Activated T-helper 1 cell treated with anti-CD3 and anti-CD28 coated beads, Interleukin-12 subunit alpha, Interleukin-12 subunit beta, Interleukin-2, Interleukin-4 antibody, amounts not matched to agents 30 ng/mL and 10 ng/mL and 1 ng/mL, durations not matched to agents 14 hours and 24 hours and 36 hours (primary cell): ENCODE measurements at regions of chr11 and their contacts with region 1.

Region 1: GRCh38 chr11:71977743-71978418 is 20.8 kb upstream of the IL18BP start:
- DNase-seq: peak; percentile 26
- H3K4me3 Mint-ChIP-seq: no peak overlapping the region
- H3K27ac Mint-ChIP-seq: no peak overlapping the region
- H3K4me1 Mint-ChIP-seq: peaks cover 11% of the 10 kb centered on the region
- H3K27me3 Mint-ChIP-seq: no peaks in the 10 kb centered on the region

Region 2: GRCh38 chr11:72024069-72024754 is 46.3 kb after region 1 on chr11:
- intact Hi-C with region 1: loop called (anchors 2 kb)
- DNase-seq: no peak
- H3K4me3 Mint-ChIP-seq: no peak overlapping the region
- H3K27ac Mint-ChIP-seq: no peak overlapping the region
- H3K4me1 Mint-ChIP-seq: peaks cover 37% of the 10 kb centered on the region
- H3K27me3 Mint-ChIP-seq: no peaks in the 10 kb centered on the region

Region 3: DNA sequence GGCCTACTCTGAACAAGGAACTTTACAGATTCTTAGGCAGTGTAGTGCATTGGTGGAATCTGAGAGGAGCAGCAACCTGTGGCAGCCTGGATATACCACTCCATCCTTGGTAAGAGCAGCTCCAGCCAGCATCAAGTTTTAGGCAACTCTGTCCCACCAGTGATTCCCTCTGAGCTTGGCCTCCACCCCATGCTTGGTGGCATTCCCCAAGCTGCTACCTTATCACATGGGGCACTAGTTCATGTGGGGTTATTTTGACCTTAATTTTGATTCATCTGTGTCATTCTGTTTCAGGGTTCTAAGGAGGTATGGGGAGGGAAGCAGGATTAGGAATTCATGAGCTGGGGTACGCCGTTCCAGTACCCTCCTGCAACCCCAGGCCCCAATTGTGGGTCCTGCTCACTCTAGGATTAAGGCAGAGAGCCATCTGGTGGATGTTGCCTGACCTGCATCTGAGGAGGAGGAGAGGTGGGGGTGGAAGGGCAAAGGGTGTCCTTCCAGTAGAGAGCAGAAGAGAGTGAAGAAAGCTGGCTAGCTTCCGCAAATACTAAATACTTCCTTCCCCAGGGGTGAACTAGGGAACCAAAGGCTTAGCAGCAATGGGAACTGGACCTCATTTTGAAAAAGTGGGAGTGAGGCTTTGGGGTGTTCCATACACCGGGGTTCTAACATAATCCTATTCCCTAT is 113.3 kb after region 1 on chr11:
- intact Hi-C with region 1: loop called (anchors 1 kb)
- DNase-seq: peak; percentile 56
- H3K4me3 Mint-ChIP-seq: no peak overlapping the region
- H3K27ac Mint-ChIP-seq: no peak overlapping the region
- H3K4me1 Mint-ChIP-seq: peaks cover 7% of the 10 kb centered on the region
- H3K27me3 Mint-ChIP-seq: no peaks in the 10 kb centered on the region